CD8-positive, alpha-beta T cell (primary cell): ENCODE measurements at regions of chr16 and their contacts with region 1.

Region 1: GRCh38 chr16:28069971-28070794 is 6.7 kb upstream of the GSG1L start:
- DNase-seq: no peak
- ATAC-seq: no peak
- H3K4me3 ChIP-seq: no peak overlapping the region
- H3K4me3 Mint-ChIP-seq: no peak overlapping the region
- H3K27ac ChIP-seq: no peak overlapping the region
- H3K27ac Mint-ChIP-seq: no peak overlapping the region
- H3K4me1 ChIP-seq: no peaks in the 10 kb centered on the region
- H3K4me1 Mint-ChIP-seq: no peaks in the 10 kb centered on the region
- H3K27me3 ChIP-seq: no peaks in the 10 kb centered on the region
- H3K27me3 Mint-ChIP-seq: peaks cover 7% of the 10 kb centered on the region
- CTCF ChIP-seq: no peak

Region 2: GRCh38 chr16:27960619-27961295 is 109.4 kb before region 1 on chr16:
- CTCF ChIA-PET with region 1: no interaction called
- POLR2A ChIA-PET with region 1: no interaction called
- intact Hi-C with region 1: no loop called
- DNase-seq: no peak
- ATAC-seq: no peak
- H3K4me3 ChIP-seq: no peak overlapping the region
- H3K4me3 Mint-ChIP-seq: no peak overlapping the region
- H3K27ac ChIP-seq: no peak overlapping the region
- H3K27ac Mint-ChIP-seq: no peak overlapping the region
- H3K4me1 ChIP-seq: no peaks in the 10 kb centered on the region
- H3K4me1 Mint-ChIP-seq: no peaks in the 10 kb centered on the region
- H3K27me3 ChIP-seq: no peaks in the 10 kb centered on the region
- H3K27me3 Mint-ChIP-seq: peaks cover 15% of the 10 kb centered on the region
- CTCF ChIP-seq: no peak

Region 3: GRCh38 chr16:27972500-27972899 is 97.7 kb before region 1 on chr16:
- CTCF ChIA-PET with region 1: interaction called, 17 read pairs
- POLR2A ChIA-PET with region 1: no interaction called
- intact Hi-C with region 1: loop called in 1 of 2 experiments (anchors 2 kb)
- DNase-seq: peak in 6 of 9 experiments; percentile 2 to 66 (median 29)
- ATAC-seq: peak; percentile 23
- H3K4me3 ChIP-seq: no peak overlapping the region
- H3K4me3 Mint-ChIP-seq: no peak overlapping the region
- H3K27ac ChIP-seq: no peak overlapping the region
- H3K27ac Mint-ChIP-seq: no peak overlapping the region
- H3K4me1 ChIP-seq: no peaks in the 10 kb centered on the region
- H3K4me1 Mint-ChIP-seq: peaks cover 3% of the 10 kb centered on the region
- H3K27me3 ChIP-seq: no peaks in the 10 kb centered on the region
- H3K27me3 Mint-ChIP-seq: peaks cover 27% of the 10 kb centered on the region
- CTCF ChIP-seq: peak; percentile 37